ENCODE measurements at regions of chr2 and their contacts with region 1.

Region 1: GRCh38 chr2:47323009-47323821 is 79.7 kb upstream of the MSH2 start:
- DNase-seq: no peak
- H3K4me3 ChIP-seq: no peak overlapping the region
- CTCF ChIP-seq: peak; percentile 96

Region 2: DNA sequence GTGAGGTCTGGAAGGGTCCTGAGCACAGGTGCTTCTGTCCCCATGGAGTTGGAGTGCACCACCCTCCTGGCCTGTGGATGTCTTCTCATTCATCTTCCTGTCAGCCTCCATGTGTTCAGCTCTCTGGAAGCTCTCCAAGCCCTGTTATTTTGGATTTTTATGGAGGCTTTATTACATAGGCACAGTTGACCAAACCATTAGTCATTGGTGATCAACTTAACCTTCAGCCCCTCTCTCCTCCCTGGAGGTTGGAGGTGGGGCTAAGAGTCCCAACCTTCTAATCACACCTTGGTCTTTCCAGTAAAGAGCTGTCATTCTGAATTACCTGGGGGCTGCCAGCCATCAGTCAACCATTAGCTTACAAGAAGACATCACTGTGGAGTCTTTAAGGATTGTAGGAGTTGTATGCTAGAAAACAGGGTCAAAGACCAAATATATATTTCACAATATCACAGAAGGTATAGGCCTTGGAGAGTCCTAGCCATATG is 400.1 kb before region 1 on chr2:
- CTCF ChIA-PET with region 1: interaction called, 56 read pairs
- POLR2A ChIA-PET with region 1: no interaction called
- DNase-seq: no peak
- H3K4me3 ChIP-seq: no peak overlapping the region
- CTCF ChIP-seq: no peak

Region 3: DNA sequence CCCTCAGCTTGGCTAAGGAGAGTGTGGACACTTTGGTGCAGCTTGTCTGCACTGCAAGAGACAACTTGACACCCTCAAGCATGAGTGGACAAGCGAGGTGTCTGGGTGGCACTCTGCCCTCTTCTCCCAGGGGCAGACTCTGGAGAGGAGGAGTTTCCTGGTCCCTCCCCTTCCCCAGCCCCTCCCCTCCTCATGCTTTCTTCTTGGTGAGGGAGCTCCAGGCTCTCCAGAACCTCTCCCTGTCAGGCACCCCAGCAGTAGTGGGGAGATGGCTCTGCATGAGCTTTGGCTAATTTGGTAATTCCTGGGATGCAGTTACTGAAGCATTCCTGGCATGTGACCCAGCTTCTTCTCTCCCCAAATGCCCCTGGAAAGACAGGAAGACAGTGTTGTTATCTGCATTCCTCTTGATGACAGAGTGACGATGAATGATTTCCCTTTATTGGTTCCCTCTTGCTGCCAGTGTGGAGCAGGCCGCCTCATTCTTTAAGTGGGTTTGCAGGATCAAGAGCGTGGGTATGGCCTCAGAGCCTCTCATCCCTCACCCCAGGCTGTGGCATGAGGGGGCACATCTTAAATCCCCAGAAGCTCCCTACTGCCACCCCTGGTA is 257.3 kb before region 1 on chr2:
- CTCF ChIA-PET with region 1: interaction called, 23 read pairs
- POLR2A ChIA-PET with region 1: no interaction called
- DNase-seq: peak; percentile 98
- H3K4me3 ChIP-seq: no peak overlapping the region
- CTCF ChIP-seq: no peak

Region 4: GRCh38 chr2:47165001-47165555 is 158.1 kb before region 1 on chr2:
- CTCF ChIA-PET with region 1: interaction called, 21 read pairs
- POLR2A ChIA-PET with region 1: no interaction called
- DNase-seq: no peak
- H3K4me3 ChIP-seq: no peak overlapping the region
- CTCF ChIP-seq: no peak

Region 5: DNA sequence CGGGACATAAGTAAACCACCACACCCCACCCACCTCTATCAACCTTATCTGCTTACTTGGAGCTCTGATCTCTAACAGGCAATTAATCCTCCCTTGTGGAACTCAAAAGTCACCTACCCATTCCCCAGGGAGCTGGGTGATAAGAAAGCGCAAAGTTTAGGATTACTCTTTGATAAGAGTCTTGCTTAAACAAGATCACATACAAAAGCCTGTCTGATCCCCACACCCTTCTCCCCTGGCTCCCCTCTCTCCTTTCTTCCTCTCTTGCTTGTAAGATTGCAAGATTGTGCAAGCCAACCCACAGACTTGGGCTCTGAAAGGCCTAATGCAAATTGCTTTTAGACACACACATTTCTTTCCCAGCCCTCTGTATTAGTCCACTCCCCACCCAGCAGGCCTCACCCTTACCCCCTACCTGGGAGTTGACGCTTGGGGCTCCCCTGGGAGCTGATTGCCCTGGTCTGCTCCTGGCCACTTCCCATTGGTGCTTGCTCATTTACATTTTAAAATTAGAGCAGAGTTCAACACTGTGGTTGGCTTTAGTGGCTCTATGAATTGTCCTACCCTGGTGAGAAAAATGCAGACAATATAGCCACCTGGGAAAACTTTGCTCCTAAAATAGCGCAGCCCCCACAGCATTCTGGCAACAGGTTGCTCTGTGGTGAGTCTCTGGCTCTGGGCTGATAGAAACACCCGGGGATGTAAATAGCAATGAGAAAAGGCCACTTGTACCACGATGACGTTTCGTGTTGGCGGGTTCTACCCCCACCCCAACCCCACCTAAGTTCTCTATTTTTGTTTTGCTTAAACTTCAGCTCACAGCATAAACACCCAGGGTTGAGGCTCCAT is 13.0 kb before region 1 on chr2:
- CTCF ChIA-PET with region 1: interaction called, 19 read pairs
- POLR2A ChIA-PET with region 1: no interaction called
- DNase-seq: no peak
- H3K4me3 ChIP-seq: no peak overlapping the region
- CTCF ChIP-seq: no peak

Region 6: GRCh38 chr2:47688561-47688960 is 365.3 kb after region 1 on chr2:
- CTCF ChIA-PET with region 1: no interaction called
- POLR2A ChIA-PET with region 1: no interaction called
- DNase-seq: no peak
- H3K4me3 ChIP-seq: no peak overlapping the region
- CTCF ChIP-seq: no peak

Region 7: DNA sequence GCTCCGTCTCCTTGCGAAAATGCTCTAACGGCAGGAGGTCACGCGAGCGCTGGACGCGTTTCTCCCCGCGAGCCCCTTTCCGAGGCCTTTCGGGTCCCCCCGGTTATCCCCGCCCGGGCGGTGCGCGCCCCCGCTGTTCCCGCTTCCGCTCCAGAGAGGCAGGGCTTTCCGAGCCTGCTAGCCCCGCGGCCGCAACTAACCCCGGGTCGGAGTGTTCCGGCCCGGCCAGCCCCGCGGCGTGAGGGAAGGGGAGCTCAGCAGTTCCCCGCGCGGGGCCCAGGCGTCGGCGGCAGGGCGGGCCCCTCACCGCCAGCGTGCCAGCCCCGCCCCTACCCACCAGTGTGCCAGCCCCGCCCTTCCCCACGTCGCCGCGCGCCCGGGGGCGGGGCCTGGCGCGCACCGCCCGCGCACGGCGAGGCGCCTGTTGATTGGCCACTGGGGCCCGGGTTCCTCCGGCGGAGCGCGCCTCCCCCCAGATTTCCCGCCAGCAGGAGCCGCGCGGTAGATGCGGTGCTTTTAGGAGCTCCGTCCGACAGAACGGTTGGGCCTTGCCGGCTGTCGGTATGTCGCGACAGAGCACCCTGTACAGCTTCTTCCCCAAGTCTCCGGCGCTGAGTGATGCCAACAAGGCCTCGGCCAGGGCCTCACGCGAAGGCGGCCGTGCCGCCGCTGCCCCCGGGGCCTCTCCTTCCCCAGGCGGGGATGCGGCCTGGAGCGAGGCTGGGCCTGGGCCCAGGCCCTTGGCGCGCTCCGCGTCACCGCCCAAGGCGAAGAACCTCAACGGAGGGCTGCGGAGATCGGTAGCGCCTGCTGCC is 459.7 kb after region 1 on chr2 and contains the start of gene MSH6:
- CTCF ChIA-PET with region 1: no interaction called
- POLR2A ChIA-PET with region 1: no interaction called
- DNase-seq: peak; percentile 10
- H3K4me3 ChIP-seq: peak within 1 kb of the TSS; percentile 93
- CTCF ChIP-seq: no peak